ENCODE measurements at regions of chr1 and their contacts with region 1.

Region 1: GRCh38 chr1:234373064-234373958 is at the start of gene COA6:
- DNase-seq: peak; percentile 85
- H3K4me3 Mint-ChIP-seq: peak within 1 kb of the TSS; percentile 97
- H3K27ac Mint-ChIP-seq: peak within 1 kb of the TSS; percentile 96
- H3K4me1 Mint-ChIP-seq: peaks cover 57% of the 10 kb centered on the region
- H3K27me3 Mint-ChIP-seq: peaks cover 2% of the 10 kb centered on the region
- total RNA-seq, gene COA6: 57.2 and 66.9 TPM in 2 replicates

Region 2: DNA sequence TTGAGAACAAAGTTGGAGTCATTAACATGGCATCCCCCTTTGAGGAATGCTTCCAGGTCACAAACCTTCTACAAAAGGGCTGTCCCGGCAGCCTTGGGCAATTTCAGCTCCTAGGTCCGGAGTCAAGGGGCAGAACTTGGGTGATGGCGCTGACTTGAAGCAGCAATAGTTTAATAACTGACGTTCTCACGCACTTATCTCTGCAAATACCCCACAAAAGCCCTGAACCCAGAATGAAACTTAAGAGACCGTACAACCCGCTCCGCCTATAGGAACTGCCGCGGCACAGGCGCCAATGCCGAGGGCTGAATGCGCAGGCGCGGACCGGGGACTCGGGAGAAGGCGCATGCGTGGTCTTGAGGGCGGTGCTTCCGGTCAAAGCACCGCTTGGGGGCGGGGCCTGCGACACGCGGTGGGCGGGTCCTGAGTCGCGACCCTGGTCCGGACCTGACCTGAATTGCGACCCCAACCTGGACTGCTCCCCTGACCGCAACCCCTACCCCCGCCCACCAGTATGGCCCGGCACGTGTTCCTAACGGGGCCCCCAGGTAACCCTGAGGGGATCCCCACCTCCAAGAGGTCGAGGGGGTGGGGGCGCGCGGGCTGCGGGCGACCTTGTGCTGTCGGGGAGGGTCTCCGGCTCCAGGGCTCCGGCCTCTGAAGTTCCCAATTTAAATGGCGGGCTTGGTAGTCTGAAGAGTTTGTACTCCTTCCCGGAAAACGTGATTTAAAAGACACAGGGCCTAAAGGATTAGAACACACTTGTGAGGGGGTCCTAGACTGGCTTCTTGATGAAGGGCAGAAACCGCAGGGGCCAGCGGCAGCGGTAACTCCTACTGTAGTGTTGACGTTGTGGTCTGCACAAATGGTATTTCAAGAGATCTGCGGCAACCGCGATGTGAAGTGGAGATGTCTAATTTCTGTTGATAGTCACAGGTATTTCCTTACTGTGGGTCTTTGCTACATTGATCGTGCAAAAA is 1422.8 kb before region 1 on chr1 and contains the start of gene NTPCR:
- intact Hi-C with region 1: loop called (anchors 2 kb)
- DNase-seq: peak; percentile 94
- H3K4me3 Mint-ChIP-seq: peak within 1 kb of the TSS; percentile 95
- H3K27ac Mint-ChIP-seq: peak within 1 kb of the TSS; percentile 93
- H3K4me1 Mint-ChIP-seq: peaks cover 43% of the 10 kb centered on the region
- H3K27me3 Mint-ChIP-seq: no peaks in the 10 kb centered on the region
- total RNA-seq, gene NTPCR: 24.5 and 26.8 TPM in 2 replicates

Region 3: DNA sequence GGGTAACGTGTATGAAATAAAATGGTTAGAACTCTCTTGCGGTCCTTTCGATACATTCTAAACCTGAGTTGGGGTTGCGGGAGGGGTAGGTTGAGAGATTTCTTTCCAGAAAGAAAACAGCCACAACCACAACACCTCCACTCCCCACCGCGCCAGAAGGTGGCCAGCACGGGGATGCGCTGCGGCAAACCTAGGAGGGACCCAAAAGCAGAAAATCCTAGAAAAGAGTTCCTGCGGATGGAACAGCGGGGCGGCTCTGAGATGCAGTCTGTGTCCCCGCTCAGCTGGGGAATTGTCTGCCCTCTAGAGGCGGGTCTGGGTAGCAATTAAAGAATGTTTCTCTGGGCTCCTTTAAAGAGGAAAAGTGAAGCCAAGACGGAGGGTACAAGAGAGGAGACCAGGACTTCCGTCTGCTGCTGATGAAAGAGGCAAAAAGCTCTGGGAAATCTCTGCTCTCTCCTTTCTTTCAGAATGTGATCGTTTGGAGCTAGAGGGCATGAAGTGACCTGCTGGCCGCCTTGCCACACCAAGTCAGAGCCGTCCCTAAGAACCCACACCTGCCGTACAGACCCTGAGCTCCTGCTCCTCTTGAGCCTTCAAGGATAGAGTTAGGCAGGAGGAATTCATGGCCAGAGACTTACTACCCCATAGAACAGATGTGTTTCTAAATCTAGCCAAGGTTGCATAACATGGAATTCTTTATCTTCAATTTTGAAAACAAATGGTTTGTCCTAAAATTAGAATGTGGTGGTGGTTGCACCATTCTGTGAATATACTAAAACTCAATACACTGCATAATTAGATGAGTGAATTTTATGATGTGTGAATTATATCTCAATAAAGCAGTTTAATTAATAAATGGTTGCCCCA is 46.6 kb before region 1 on chr1:
- intact Hi-C with region 1: loop called (anchors 1 kb)
- DNase-seq: peak; percentile 53
- H3K4me3 Mint-ChIP-seq: peak overlapping the region; percentile 60
- H3K27ac Mint-ChIP-seq: peak overlapping the region; percentile 33
- H3K4me1 Mint-ChIP-seq: peaks cover 34% of the 10 kb centered on the region
- H3K27me3 Mint-ChIP-seq: peaks cover 25% of the 10 kb centered on the region

Region 4: DNA sequence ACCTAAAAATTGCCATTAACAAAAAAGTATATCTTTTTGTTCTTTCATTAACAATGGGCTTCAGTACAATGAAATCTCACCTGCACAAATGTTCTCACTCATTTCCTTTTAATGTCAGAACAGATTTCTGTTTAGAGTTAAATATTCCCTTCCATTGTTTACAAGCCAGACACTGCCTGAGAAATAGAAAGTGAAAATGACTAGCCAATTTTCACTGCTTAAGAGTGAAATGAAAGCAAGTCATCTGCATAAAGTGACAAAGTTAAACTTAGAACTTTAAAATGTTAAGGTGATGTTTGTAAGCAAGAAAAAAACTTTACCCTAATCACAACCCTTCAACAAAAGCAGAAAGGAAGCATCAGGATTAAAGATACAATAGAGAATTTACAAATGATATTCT is 27.5 kb after region 1 on chr1:
- intact Hi-C with region 1: loop called (anchors 2 kb)
- DNase-seq: no peak
- H3K4me3 Mint-ChIP-seq: peak overlapping the region; percentile 50
- H3K27ac Mint-ChIP-seq: peak overlapping the region; percentile 70
- H3K4me1 Mint-ChIP-seq: peaks cover 60% of the 10 kb centered on the region
- H3K27me3 Mint-ChIP-seq: peaks cover 2% of the 10 kb centered on the region

Region 5: DNA sequence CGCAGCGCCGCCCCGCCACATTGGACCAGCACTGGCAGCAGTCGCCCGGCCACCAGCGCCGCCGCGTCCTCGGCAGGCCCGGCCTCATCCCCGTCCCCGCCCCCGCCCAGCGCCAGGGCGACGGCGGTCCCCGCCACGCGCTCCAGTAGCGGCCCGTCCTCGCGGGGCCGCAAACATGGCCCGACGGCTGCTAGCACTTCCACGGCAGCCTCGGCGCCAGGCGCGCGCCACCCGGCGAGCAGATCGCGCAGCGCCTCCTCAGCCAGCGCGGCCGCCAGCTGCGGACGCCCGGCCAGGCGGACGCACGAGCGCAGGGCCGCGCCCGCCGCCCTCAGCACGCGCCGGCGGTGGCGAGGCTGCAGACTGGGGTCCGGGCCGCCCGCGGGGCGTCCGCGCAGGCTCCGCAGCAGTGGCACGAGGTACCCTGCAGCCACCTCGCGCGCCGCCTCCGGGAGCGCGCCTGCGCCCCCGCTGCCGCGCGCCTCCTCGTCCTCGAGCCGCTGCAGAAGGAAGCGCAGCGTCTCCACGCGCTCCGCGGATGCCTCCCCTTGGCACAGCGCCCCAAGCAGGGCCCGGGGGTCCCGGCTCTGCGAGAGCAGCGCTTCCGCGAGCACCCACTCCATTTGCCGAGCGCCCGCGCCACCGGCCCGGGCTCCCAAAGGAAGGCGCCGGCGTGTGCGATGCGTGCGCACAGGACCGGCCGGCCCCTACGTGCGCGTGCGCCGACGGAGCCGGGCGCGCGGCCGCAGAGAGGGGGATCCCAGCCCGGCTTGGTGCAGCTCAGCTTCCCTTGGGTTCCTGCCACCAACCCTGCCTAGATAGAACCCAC is 105.4 kb after region 1 on chr1 and contains the start of gene TARBP1:
- intact Hi-C with region 1: loop called (anchors 1 kb)
- DNase-seq: peak; percentile 76
- H3K4me3 Mint-ChIP-seq: peak within 1 kb of the TSS; percentile 90
- H3K27ac Mint-ChIP-seq: peak within 1 kb of the TSS; percentile 75
- H3K4me1 Mint-ChIP-seq: peaks cover 47% of the 10 kb centered on the region
- H3K27me3 Mint-ChIP-seq: peaks cover 17% of the 10 kb centered on the region
- total RNA-seq, gene TARBP1: 71.7 and 78.9 TPM in 2 replicates

Region 6: DNA sequence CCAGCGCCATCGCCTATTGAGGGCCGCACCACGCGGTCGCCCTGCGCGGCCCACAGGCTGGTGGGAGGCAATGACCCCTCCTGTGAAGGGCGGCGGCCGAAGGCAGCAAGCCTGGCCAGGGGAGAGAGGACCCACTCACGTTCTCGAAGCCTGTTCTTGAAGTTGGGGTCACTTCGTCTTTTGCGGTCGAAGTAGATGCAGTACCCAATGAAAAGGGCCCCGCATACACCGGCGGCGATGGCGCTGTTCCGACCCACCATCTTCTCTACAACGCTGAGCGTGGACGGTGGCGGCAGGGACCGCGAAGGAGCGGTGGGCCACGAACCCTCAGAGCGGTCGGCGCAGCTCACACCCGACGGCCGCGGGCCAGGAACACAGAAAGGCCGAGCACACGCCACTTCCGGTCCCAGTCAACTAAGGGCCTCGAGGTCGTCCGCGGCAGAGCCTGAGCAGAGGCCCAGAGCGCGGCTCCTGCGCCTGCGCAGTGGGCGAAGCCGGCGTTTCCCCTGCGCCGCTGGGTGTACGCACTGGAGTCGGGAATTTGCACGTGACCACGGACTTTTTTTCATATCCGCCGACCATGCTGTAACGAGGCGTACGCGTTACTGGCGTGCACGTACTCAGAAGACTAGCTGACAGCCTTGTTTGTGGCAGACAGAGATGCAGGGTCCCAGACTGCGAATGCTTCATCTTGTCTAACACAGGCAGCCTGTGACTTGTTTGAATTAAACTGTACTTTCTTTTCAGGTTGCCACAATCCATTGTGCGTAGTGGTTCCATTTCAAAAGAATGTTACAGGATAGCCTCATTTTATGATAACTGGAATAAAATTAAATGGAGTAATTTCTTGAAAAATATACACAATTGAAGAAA is 755.4 kb after region 1 on chr1 and contains the start of gene TOMM20:
- intact Hi-C with region 1: loop called (anchors 1 kb)
- DNase-seq: peak; percentile 94
- H3K4me3 Mint-ChIP-seq: peak within 1 kb of the TSS; percentile 99
- H3K27ac Mint-ChIP-seq: peak within 1 kb of the TSS; percentile 94
- H3K4me1 Mint-ChIP-seq: peaks cover 45% of the 10 kb centered on the region
- H3K27me3 Mint-ChIP-seq: no peaks in the 10 kb centered on the region
- total RNA-seq, gene TOMM20: 112 and 137 TPM in 2 replicates

Region 7: GRCh38 chr1:236142253-236143103 is 1769.2 kb after region 1 on chr1 and contains the start of gene GPR137B:
- intact Hi-C with region 1: loop called (anchors 2 kb)
- DNase-seq: peak; percentile 39
- H3K4me3 Mint-ChIP-seq: peak within 1 kb of the TSS; percentile 91
- H3K27ac Mint-ChIP-seq: peak within 1 kb of the TSS; percentile 93
- H3K4me1 Mint-ChIP-seq: peaks cover 25% of the 10 kb centered on the region
- H3K27me3 Mint-ChIP-seq: peaks cover 42% of the 10 kb centered on the region
- total RNA-seq, gene GPR137B: 9.2 and 10.5 TPM in 2 replicates

Measured in activated T-helper 1 cell treated with anti-CD3 and anti-CD28 coated beads, Interleukin-12 subunit alpha, Interleukin-12 subunit beta, Interleukin-2, Interleukin-4 antibody, amounts not matched to agents 30 ng/mL and 10 ng/mL and 1 ng/mL, durations not matched to agents 14 hours and 24 hours and 36 hours (primary cell).